Dendritic cell treated with granulocyte-macrophage colony-stimulating factor and Interleukin-4, amounts not matched to agents 40 ng/mL and 50 ng/mL, for 4 days (primary cell): ENCODE measurements at regions of chr11 and their contacts with region 1.

Region 1: DNA sequence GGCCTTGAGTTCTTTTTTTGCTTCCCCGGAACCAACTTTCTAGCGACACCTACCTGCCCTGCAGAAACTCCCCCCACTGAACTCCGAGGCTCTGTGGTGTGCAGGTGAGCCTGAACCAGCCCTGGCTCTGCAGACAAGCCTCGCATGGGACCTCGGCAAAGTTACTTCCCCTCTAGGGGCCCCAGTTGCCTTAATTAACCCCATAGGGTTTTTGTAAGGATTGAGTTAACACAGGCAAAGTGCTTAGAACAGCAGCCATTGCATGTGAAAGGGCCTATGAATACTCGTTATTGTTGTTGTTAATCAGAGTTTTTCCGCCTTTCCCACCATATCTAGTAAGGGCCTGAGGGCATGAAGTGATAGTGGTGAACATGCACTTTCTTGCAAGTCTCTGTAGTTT is 12.6 kb upstream of the SYT13 start:
- H3K4me3 Mint-ChIP-seq: no peak overlapping the region
- H3K27ac Mint-ChIP-seq: no peak overlapping the region
- H3K4me1 Mint-ChIP-seq: no peaks in the 10 kb centered on the region
- H3K27me3 Mint-ChIP-seq: peaks cover 3% of the 10 kb centered on the region

Region 2: DNA sequence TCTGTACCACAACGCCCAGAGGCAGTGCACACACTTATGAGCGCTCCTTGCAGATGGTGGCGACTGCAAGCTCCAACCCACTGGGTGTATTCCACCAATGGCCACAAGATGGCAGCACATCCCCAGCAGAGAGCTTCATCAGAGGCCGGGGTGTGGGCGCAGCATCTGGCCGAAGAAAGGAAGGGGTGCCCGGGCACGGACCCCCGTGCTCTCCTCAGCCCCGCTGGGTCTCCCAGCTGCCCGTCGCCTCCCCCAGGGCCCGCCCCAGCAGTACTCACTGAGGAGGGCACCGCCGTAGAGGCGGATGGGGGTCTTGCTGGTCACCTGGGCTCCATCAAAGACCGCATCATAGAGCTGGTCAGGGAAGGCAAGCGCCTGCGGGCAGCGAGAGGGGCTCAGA is 362.2 kb before region 1 on chr11:
- intact Hi-C with region 1: loop called (anchors 10 kb)
- H3K4me3 Mint-ChIP-seq: no peak overlapping the region
- H3K27ac Mint-ChIP-seq: no peak overlapping the region
- H3K4me1 Mint-ChIP-seq: peaks cover 35% of the 10 kb centered on the region
- H3K27me3 Mint-ChIP-seq: peaks cover 7% of the 10 kb centered on the region

Region 3: GRCh38 chr11:45252134-45252855 is 46.4 kb before region 1 on chr11:
- intact Hi-C with region 1: no loop called
- H3K4me3 Mint-ChIP-seq: no peak overlapping the region
- H3K27ac Mint-ChIP-seq: no peak overlapping the region
- H3K4me1 Mint-ChIP-seq: no peaks in the 10 kb centered on the region
- H3K27me3 Mint-ChIP-seq: peaks cover 4% of the 10 kb centered on the region

Region 4: DNA sequence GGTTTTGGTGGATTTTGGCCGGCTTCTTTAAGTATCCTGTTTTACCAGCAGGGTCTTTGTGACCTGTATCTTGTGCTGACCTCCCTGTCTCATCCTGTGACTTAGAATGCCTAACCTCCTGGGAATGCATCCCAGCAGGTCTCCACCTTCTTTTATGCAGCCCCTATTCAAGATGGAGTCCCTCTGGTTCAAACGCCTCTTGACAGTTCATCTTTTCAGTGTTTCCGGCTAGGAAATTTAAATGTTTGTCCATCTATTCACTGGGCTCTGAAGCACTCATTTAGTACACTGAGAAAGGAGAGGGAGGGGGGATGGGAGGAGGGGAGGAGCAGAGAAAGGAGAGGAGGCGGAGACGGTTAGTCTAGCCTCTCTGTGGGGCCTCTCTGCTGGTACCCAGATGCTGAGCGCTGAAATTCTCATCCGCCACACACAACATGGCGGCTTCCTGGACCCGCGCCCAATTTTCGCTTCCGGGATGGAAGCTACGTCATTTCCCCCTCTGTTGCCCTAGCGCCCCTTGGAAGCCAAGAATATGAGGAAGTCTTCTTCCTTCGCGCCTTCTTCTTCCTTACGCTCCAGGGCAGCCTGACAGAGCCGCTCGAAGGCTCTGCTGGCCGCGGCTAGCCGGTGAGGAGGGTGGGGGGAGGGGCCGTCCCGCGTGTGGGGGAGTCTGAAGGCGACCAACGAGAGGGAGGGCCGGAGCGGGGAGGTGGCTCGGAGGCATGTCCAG is 56.4 kb after region 1 on chr11:
- intact Hi-C with region 1: no loop called
- H3K4me3 Mint-ChIP-seq: peak overlapping the region; percentile 4
- H3K27ac Mint-ChIP-seq: no peak overlapping the region
- H3K4me1 Mint-ChIP-seq: no peaks in the 10 kb centered on the region
- H3K27me3 Mint-ChIP-seq: peaks cover 48% of the 10 kb centered on the region

Region 5: DNA sequence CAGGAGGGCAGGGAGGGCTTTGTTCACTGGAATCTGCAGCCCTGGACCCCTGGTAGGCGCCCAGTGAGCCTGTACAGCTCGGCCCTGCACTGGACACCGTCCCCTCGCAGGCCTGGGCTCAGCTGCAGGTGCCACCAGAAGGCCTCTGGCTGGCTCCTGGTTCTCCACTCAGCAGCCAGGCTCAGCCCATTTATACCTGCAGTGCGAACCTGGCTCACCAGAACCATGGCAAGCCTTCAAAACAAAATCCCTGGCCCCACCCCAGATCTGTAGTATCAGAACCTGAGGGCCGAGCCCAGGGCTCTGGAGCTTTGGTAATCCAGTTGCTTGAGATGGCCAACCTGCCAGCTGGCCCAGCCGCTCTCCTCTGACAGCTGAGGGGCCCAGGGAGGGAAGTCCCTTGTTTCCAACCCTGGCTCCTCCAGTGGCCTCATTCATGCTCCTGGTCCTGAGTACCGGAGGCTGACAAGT is 609.2 kb after region 1 on chr11:
- intact Hi-C with region 1: no loop called
- H3K4me3 Mint-ChIP-seq: no peak overlapping the region
- H3K27ac Mint-ChIP-seq: no peak overlapping the region
- H3K4me1 Mint-ChIP-seq: peaks cover 12% of the 10 kb centered on the region
- H3K27me3 Mint-ChIP-seq: peaks cover 3% of the 10 kb centered on the region